ENCODE measurements at regions of chr11 and their contacts with region 1.

Region 1: DNA sequence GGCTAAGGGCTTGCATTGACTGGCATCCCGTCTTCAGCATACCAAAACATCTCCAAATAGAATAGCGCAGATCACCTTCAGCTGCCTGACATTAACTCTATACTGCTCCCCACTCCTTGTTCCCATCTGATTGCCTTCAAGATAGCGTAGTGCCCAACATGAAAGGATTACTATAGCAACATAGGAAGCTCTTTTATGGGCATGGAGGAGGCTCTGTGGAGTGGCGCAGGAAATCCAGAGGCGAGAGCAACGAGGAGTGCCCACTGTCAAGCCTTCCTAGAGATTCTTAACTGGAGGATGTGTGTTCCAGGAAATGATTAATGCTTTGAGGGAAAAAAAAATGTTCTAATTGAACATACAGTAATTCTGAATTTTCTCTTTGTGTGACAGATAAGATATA is 213.3 kb downstream of the CADM1 start:
- DNase-seq: peak; percentile 74
- H3K4me3 ChIP-seq: peak overlapping the region in 1 of 3 experiments; percentile 34
- H3K27ac ChIP-seq: peak overlapping the region; percentile 87
- H3K4me1 ChIP-seq: peaks cover 31% of the 10 kb centered on the region
- H3K27me3 ChIP-seq: no peaks in the 10 kb centered on the region
- CTCF ChIP-seq: no peak
- POLR2A ChIP-seq: no peak

Region 2: GRCh38 chr11:115222218-115222862 is 68.6 kb before region 1 on chr11:
- CTCF ChIA-PET with region 1: no interaction called
- POLR2A ChIA-PET with region 1: no interaction called
- dilution Hi-C with region 1: no loop called
- intact Hi-C with region 1: loop called (anchors 5 kb)
- DNase-seq: peak; percentile 40
- H3K4me3 ChIP-seq: no peak overlapping the region
- H3K27ac ChIP-seq: peak overlapping the region; percentile 17
- H3K4me1 ChIP-seq: peaks cover 5% of the 10 kb centered on the region
- H3K27me3 ChIP-seq: no peaks in the 10 kb centered on the region
- CTCF ChIP-seq: no peak
- POLR2A ChIP-seq: no peak

Region 3: DNA sequence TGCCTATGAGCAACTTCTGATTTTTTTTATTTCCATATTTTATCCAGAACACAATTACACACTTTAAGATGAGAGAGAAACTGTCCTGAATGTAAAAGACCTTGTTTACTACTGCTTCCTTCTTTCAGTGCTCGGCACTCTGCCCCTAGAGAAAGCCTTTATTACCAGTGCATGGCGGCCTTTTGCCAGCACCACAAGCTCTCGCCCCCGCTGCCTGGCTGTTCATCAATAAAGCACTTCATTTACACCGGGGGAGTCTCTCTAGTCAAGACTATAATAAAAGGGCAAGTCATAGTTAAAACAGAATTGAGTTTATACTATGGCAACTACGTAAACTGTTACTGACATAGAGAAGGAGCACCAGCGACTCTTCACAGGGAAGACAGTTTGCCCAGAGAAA is 46.1 kb before region 1 on chr11:
- CTCF ChIA-PET with region 1: no interaction called
- POLR2A ChIA-PET with region 1: no interaction called
- dilution Hi-C with region 1: no loop called
- intact Hi-C with region 1: no loop called
- DNase-seq: no peak
- H3K4me3 ChIP-seq: no peak overlapping the region
- H3K27ac ChIP-seq: no peak overlapping the region
- H3K4me1 ChIP-seq: no peaks in the 10 kb centered on the region
- H3K27me3 ChIP-seq: no peaks in the 10 kb centered on the region
- CTCF ChIP-seq: no peak
- POLR2A ChIP-seq: no peak

Region 4: DNA sequence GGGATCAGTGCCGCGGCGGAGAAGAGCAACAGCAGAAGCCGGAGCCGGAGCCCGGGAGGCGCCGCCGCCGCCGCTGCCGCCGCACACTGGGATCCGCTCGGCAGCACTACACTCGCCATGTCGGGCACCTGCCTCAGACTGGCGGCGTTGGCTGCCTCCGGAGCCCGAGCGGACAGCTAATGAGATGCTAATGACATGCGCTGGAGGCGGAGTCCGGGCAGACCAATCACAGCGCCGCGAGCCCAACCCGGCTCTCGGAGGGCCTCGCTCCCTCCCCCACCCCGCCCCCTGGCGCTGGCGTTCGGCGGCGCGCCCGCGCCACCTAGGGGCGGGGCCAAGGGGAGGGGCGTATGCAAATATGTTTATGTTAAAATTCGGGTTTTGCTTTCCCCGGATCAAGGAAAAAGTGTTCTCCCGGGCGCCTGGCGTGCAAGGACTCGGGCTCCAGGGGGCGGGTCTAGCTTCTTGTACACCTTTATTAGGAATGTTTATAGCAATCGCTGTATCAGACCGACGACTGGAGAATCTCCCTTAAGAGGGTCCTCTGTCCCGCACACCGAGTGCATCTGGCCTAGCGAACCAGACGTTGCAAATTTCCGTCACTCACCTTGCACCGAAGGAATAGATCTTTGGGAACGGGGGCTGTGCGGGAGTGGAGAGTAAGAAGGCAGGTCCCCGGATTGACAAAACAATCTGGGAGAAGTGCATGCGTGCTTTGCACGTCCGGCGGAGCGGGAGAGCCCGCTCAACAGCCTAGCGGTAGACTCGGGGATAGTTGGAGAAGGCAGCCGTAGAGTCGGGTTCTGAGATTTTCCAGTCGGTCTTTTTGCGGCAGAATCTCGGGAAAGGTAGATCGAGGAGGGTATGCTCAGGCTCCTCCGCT is 213.6 kb after region 1 on chr11 and contains the start of gene CADM1:
- CTCF ChIA-PET with region 1: no interaction called
- POLR2A ChIA-PET with region 1: no interaction called
- dilution Hi-C with region 1: no loop called
- intact Hi-C with region 1: loop called (anchors 2 kb)
- DNase-seq: peak; percentile 84
- H3K4me3 ChIP-seq: peak within 1 kb of the TSS; percentile 4 to 42 (median 41)
- H3K27ac ChIP-seq: no peak within 1 kb of the TSS
- H3K4me1 ChIP-seq: peaks cover 9% of the 10 kb centered on the region
- H3K27me3 ChIP-seq: peaks cover 16 to 39% of the 10 kb centered on the region in 2 experiments
- CTCF ChIP-seq: peak; percentile 58 to 63
- POLR2A ChIP-seq: no peak
- total RNA-seq, gene CADM1: 2.6 and 2.9 TPM in 2 replicates